CD8-positive, alpha-beta T cell (primary cell): ENCODE measurements at regions of chr7 and their contacts with region 1.

Region 1: DNA sequence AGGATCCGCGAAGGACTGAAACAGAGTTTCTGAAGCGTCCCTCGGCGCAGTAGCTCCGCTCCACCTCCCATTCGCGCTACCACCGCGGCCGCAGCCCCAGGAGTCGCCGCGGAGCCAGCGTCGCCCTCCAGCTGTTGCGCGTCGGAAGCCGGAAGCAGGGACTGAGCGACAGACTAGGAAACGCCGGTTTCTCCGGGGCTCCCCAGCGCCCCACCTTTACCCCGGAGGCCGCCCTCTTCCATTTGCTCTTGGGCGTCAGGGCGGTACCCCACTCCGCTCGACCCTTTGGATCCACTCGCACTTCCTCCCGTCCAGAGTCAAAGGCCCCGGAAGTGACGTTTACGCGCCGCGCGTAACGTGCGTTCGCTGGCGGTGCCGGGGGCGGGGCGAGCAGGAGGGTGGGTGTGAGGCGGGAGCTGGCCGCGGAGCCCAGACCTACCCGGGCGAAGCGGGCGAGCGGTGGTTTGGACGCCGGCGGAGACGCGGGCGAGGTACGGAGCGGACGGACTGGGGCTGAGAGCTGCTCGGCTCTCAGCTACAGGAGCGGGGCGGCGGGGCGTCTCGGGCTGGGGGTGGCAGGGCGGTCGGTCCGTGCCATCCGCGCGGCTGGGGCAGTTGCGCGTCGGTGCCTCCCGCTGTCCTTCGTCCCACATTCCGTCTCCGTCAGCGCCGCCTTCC is at the start of gene RABGEF1:
- DNase-seq: peak; percentile 91 to 99 (median 98)
- ATAC-seq: peak; percentile 93
- H3K4me3 ChIP-seq: peak within 1 kb of the TSS; percentile 71 to 88
- H3K4me3 Mint-ChIP-seq: peak within 1 kb of the TSS; percentile 94
- H3K27ac ChIP-seq: peak within 1 kb of the TSS; percentile 92 to 95
- H3K27ac Mint-ChIP-seq: peak within 1 kb of the TSS; percentile 98
- H3K4me1 ChIP-seq: peaks cover 18% of the 10 kb centered on the region
- H3K4me1 Mint-ChIP-seq: peaks cover 51% of the 10 kb centered on the region
- H3K27me3 ChIP-seq: no peaks in the 10 kb centered on the region
- H3K27me3 Mint-ChIP-seq: no peaks in the 10 kb centered on the region
- CTCF ChIP-seq: no peak
- total RNA-seq, gene RABGEF1: 34.5 to 38.5 TPM

Region 2: DNA sequence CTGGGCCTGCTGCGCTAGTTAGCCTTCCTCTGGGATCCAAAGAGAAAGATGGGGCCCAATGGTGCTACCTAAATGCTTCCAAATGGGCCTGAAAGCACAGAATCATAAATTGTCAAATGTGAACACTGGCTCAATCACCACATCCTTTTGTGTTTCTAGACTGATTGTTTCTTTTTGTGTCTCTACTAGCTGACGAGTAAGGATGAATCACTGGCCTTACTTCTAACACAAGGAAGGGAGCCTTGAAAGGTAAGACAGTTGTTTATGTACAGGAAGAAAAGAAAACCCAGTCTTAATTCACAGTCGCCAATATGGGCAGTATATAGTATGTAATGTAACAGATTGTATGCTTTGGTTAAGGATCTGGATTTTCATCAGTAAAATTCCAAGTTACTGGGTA is 1277.3 kb before region 1 on chr7:
- CTCF ChIA-PET with region 1: no interaction called
- POLR2A ChIA-PET with region 1: no interaction called
- intact Hi-C with region 1: no loop called
- DNase-seq: no peak
- ATAC-seq: no peak
- H3K4me3 ChIP-seq: no peak overlapping the region
- H3K4me3 Mint-ChIP-seq: no peak overlapping the region
- H3K27ac ChIP-seq: no peak overlapping the region
- H3K27ac Mint-ChIP-seq: peak overlapping the region; percentile 3
- H3K4me1 ChIP-seq: no peaks in the 10 kb centered on the region
- H3K4me1 Mint-ChIP-seq: peaks cover 12% of the 10 kb centered on the region
- H3K27me3 ChIP-seq: no peaks in the 10 kb centered on the region
- H3K27me3 Mint-ChIP-seq: no peaks in the 10 kb centered on the region
- CTCF ChIP-seq: no peak

Region 3: DNA sequence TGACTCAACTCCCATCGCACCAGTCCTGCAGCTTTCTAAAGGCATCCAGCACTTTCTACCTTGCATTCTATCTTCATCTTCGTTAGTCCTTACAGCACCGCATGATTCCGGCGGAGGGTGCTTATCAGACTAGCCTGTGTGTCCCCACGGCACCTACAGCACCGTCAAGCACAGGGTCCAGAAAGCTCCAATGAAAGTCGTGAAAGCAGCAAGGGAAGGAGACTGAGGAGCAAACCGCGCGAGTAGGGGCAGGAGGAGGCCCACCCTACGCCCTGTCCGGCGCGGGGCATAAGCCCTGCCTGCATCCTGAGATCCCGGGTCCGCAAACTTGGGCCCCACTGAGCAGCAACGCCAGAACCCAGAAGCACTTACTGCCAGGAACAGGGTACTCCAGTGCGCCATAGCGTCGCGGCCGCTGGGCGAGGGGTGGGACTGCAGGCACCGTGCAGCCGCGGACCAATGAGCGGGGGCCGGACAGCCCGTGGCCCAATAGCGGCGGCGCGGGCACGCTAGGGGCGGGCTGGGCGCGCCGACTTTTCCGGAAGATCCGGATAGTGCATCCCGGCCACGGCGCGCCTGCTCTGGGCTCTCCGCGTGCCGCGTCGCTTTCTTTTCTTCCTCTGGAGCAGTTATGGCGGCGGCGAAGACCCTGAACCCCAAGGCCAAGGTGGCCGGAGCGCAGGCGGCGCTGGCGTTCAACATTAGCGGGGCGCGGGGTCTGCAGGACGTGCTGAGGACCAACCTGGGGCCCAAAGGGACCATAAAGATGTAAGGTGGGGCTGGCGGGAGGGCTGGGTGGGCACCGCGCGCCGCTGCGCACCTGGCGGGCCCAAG is 989.7 kb before region 1 on chr7:
- CTCF ChIA-PET with region 1: no interaction called
- POLR2A ChIA-PET with region 1: no interaction called
- intact Hi-C with region 1: loop called in 1 of 2 experiments (anchors 2 kb)
- DNase-seq: peak; percentile 65 to 91 (median 87)
- ATAC-seq: peak; percentile 96
- H3K4me3 ChIP-seq: peak overlapping the region; percentile 77 to 88
- H3K4me3 Mint-ChIP-seq: peak overlapping the region; percentile 88
- H3K27ac ChIP-seq: peak overlapping the region; percentile 74 to 81
- H3K27ac Mint-ChIP-seq: peak overlapping the region; percentile 88
- H3K4me1 ChIP-seq: peaks cover 16% of the 10 kb centered on the region
- H3K4me1 Mint-ChIP-seq: peaks cover 35% of the 10 kb centered on the region
- H3K27me3 ChIP-seq: no peaks in the 10 kb centered on the region
- H3K27me3 Mint-ChIP-seq: no peaks in the 10 kb centered on the region
- CTCF ChIP-seq: no peak

Region 4: DNA sequence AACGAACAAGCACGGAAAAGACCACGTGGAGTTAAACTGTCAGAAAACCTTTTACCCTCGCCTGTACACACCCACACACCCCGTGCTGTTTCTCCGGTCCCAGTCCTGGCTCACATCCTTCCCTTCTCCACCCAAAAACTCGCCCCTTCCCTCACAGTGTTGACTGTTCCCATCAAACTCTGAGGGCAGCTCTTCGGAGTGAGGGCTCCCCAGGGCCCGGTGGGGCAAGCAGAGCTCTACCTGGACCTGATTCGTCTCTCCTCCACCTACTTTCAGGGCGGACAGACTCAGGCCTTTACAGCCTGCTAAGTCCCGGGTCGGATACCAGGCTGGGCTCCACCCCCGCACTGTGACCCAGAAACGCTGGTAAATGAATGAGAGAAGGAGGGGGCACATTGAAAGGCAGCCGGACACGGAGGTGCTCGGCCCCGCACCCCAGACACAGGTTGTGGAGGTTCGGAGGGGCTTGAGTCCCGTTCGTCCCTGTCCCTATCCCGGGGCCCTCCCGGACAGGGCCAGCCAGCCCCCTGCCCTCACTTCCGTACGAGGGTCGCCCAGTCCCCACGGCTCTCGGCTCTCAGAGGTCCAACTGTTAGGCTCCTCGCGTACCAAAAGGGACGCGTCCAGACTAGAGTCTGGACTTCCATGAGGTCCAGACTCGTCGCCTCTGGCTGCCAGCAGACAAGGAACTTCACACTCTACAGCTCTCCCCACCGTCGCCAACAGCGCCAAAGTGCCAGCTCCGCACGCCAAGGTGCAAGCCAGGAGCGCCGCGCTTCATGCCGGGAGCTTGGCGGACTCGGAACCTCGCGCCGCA is 696.6 kb before region 1 on chr7:
- CTCF ChIA-PET with region 1: no interaction called
- POLR2A ChIA-PET with region 1: no interaction called
- intact Hi-C with region 1: no loop called
- DNase-seq: peak in 7 of 9 experiments; percentile 2 to 51 (median 29)
- ATAC-seq: peak; percentile 68
- H3K4me3 ChIP-seq: peak overlapping the region; percentile 45 to 58
- H3K4me3 Mint-ChIP-seq: peak overlapping the region; percentile 84
- H3K27ac ChIP-seq: no peak overlapping the region
- H3K27ac Mint-ChIP-seq: no peak overlapping the region
- H3K4me1 ChIP-seq: no peaks in the 10 kb centered on the region
- H3K4me1 Mint-ChIP-seq: peaks cover 8% of the 10 kb centered on the region
- H3K27me3 ChIP-seq: peaks cover 0 to 7% of the 10 kb centered on the region in 2 experiments
- H3K27me3 Mint-ChIP-seq: peaks cover 22% of the 10 kb centered on the region
- CTCF ChIP-seq: no peak

Region 5: DNA sequence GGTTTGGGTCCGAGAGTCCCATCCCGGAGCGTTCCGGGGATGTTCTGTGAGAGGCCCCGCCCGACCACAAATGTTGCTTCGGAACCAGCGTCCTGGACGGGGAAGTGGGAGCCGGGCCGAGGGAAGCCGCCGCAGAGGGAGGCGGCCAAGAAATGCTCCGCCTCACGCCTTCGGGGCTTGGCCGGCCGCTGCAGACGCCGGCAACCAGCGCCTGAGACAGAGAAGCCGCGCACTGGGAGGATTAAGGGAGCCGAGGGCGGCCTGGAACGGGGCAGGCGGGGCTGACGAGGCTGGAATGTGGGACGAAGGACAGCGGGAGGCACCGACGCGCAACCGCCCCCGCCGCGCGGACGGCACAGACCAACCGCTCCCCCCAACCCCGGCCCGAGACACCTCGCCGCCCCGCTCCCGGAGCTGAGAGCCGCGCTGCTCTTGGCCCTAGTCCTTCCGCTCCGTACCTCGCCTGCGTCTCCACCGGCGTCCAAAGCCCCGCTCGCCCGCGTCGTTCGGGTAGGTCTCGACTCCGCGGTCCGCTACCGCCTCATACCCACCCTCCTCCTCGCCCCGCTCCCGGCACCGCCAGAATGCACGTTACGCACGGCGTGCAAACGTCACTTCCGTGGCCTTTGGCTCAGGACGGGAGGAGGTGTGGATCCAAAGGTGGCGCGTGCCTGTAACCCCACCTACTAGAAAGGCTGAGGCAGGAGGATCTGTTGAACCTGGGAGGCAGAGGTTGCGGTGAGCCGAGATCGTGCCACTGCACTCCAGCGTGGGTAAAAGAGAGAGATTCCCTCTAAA is 148.4 kb before region 1 on chr7:
- CTCF ChIA-PET with region 1: no interaction called
- POLR2A ChIA-PET with region 1: interaction called, 3 read pairs
- intact Hi-C with region 1: loop called (anchors 2 kb)
- DNase-seq: peak; percentile 69 to 95 (median 91)
- ATAC-seq: peak; percentile 98
- H3K4me3 ChIP-seq: peak overlapping the region; percentile 73 to 95
- H3K4me3 Mint-ChIP-seq: peak overlapping the region; percentile 99
- H3K27ac ChIP-seq: peak overlapping the region; percentile 67 to 89
- H3K27ac Mint-ChIP-seq: peak overlapping the region; percentile 98
- H3K4me1 ChIP-seq: peaks cover 37% of the 10 kb centered on the region
- H3K4me1 Mint-ChIP-seq: peaks cover 49% of the 10 kb centered on the region
- H3K27me3 ChIP-seq: no peaks in the 10 kb centered on the region
- H3K27me3 Mint-ChIP-seq: no peaks in the 10 kb centered on the region
- CTCF ChIP-seq: no peak

Region 6: GRCh38 chr7:66654123-66654732 is 86.2 kb before region 1 on chr7:
- CTCF ChIA-PET with region 1: no interaction called
- POLR2A ChIA-PET with region 1: interaction called, 10 read pairs
- intact Hi-C with region 1: loop called (anchors 1 to 2 kb)
- DNase-seq: peak; percentile 94 to 99 (median 98)
- ATAC-seq: peak; percentile 91
- H3K4me3 ChIP-seq: peak overlapping the region; percentile 64 to 86
- H3K4me3 Mint-ChIP-seq: peak overlapping the region; percentile 99
- H3K27ac ChIP-seq: peak overlapping the region; percentile 92 to 98
- H3K27ac Mint-ChIP-seq: peak overlapping the region; percentile 99
- H3K4me1 ChIP-seq: peaks cover 7% of the 10 kb centered on the region
- H3K4me1 Mint-ChIP-seq: peaks cover 24% of the 10 kb centered on the region
- H3K27me3 ChIP-seq: no peaks in the 10 kb centered on the region
- H3K27me3 Mint-ChIP-seq: no peaks in the 10 kb centered on the region
- CTCF ChIP-seq: no peak

Region 7: GRCh38 chr7:66844552-66845378 is 104.3 kb after region 1 on chr7:
- CTCF ChIA-PET with region 1: no interaction called
- POLR2A ChIA-PET with region 1: interaction called, 7 read pairs
- intact Hi-C with region 1: loop called (anchors 2 kb)
- DNase-seq: peak; percentile 98 to 100 (median 99)
- ATAC-seq: peak; percentile 87
- H3K4me3 ChIP-seq: peak overlapping the region; percentile 90 to 96
- H3K4me3 Mint-ChIP-seq: peak overlapping the region; percentile 97
- H3K27ac ChIP-seq: peak overlapping the region; percentile 97 to 98
- H3K27ac Mint-ChIP-seq: peak overlapping the region; percentile 100
- H3K4me1 ChIP-seq: peaks cover 13% of the 10 kb centered on the region
- H3K4me1 Mint-ChIP-seq: peaks cover 25% of the 10 kb centered on the region
- H3K27me3 ChIP-seq: no peaks in the 10 kb centered on the region
- H3K27me3 Mint-ChIP-seq: no peaks in the 10 kb centered on the region
- CTCF ChIP-seq: peak; percentile 53